GM10248 (cell line): ENCODE measurements at regions of chr3 and their contacts with region 1.

Region 1: GRCh38 chr3:23166276-23166675 is 36.9 kb upstream of the UBE2E2 start:
- DNase-seq: no peak
- CTCF ChIP-seq: no peak

Region 2: GRCh38 chr3:23183734-23184133 is 17.5 kb after region 1 on chr3:
- CTCF ChIA-PET with region 1: interaction called, 14 read pairs
- POLR2A ChIA-PET with region 1: no interaction called
- DNase-seq: no peak
- CTCF ChIP-seq: peak; percentile 39